ENCODE measurements at regions of chr3 and their contacts with region 1.

Region 1: GRCh38 chr3:150183678-150184425 is 213.2 kb upstream of the PFN2 start:
- DNase-seq: peak; percentile 8
- H3K4me3 Mint-ChIP-seq: no peak overlapping the region
- H3K27ac Mint-ChIP-seq: no peak overlapping the region
- H3K4me1 Mint-ChIP-seq: no peaks in the 10 kb centered on the region
- H3K27me3 Mint-ChIP-seq: peaks cover 7% of the 10 kb centered on the region

Region 2: GRCh38 chr3:149752051-149752787 is 431.6 kb before region 1 on chr3 and contains the start of gene COMMD2:
- intact Hi-C with region 1: loop called (anchors 10 kb)
- DNase-seq: peak; percentile 65
- H3K4me3 Mint-ChIP-seq: peak within 1 kb of the TSS; percentile 95
- H3K27ac Mint-ChIP-seq: peak within 1 kb of the TSS; percentile 59
- H3K4me1 Mint-ChIP-seq: peaks cover 14% of the 10 kb centered on the region
- H3K27me3 Mint-ChIP-seq: peaks cover 4% of the 10 kb centered on the region
- total RNA-seq, gene COMMD2: 44.2 and 44.8 TPM in 2 replicates

Region 3: DNA sequence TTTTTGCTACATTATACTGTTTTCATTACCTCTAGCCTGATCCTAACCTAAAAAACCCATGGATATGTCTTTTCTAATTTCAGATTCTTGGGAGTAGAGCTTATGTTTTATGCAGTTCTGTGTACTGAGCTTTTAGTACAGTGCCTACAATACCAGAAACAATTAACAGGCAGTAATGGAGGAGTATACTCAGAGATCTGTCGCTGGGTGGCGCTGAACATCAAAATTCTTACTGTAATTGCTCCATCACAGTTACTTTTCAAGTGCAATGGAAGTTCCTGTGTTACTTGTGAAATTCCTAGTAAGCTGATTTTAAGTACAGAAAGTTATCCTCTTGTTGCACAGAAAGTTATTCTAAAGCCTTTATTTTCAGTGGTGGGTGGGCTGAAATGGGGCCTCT is 304.0 kb before region 1 on chr3:
- intact Hi-C with region 1: loop called (anchors 5 kb)
- DNase-seq: no peak
- H3K4me3 Mint-ChIP-seq: no peak overlapping the region
- H3K27ac Mint-ChIP-seq: no peak overlapping the region
- H3K4me1 Mint-ChIP-seq: peaks cover 10% of the 10 kb centered on the region
- H3K27me3 Mint-ChIP-seq: no peaks in the 10 kb centered on the region

Region 4: GRCh38 chr3:149936812-149937233 is 247.0 kb before region 1 on chr3:
- intact Hi-C with region 1: loop called (anchors 1 kb)
- DNase-seq: no peak
- H3K4me3 Mint-ChIP-seq: no peak overlapping the region
- H3K27ac Mint-ChIP-seq: no peak overlapping the region
- H3K4me1 Mint-ChIP-seq: peaks cover 7% of the 10 kb centered on the region
- H3K27me3 Mint-ChIP-seq: no peaks in the 10 kb centered on the region

Region 5: DNA sequence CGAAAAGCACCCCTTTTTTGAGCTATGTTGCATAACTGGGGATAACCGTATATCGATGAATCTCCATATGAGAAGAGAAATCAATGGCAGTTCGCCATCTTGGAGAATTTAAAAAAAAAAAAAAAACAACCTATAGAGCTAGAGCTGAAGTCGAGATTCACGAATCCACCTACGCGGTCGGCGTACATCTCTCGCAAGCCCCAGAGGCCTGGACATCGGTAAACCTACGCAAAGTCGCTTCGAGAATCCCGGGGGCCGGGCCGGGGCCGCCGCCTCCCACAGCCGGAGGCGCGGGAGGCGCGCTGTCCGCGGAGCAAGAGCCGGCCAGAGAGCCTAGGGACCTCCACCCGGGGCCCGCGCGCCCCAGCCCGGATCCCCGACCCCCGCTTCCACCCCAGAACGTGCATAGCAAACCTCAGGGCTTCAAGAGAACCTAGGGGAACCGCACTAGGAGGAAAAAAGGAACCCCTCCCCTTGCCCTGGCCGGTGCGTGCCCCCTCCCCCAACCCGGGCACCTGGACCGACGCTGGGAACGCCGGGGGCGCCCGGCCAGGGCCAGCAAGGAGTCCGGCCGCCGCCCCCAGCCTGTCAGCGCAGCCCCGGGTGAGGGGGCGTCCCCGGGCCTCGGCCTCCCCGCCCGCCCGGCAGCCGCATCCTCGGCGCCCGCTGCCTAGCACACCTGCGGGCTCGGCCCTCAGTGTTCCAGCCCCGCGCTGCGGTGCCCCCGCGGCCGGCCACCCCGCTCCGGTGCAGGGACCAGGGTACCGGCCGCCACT is 213.7 kb before region 1 on chr3:
- intact Hi-C with region 1: loop called (anchors 1 kb)
- DNase-seq: peak; percentile 56
- H3K4me3 Mint-ChIP-seq: peak overlapping the region; percentile 80
- H3K27ac Mint-ChIP-seq: no peak overlapping the region
- H3K4me1 Mint-ChIP-seq: peaks cover 12% of the 10 kb centered on the region
- H3K27me3 Mint-ChIP-seq: peaks cover 54% of the 10 kb centered on the region

Region 6: GRCh38 chr3:150521463-150521862 is 337.6 kb after region 1 on chr3:
- intact Hi-C with region 1: no loop called
- DNase-seq: no peak
- H3K4me3 Mint-ChIP-seq: no peak overlapping the region
- H3K27ac Mint-ChIP-seq: no peak overlapping the region
- H3K4me1 Mint-ChIP-seq: no peaks in the 10 kb centered on the region
- H3K27me3 Mint-ChIP-seq: peaks cover 13% of the 10 kb centered on the region